ENCODE measurements at regions of chr19 and their contacts with region 1.

Region 1: DNA sequence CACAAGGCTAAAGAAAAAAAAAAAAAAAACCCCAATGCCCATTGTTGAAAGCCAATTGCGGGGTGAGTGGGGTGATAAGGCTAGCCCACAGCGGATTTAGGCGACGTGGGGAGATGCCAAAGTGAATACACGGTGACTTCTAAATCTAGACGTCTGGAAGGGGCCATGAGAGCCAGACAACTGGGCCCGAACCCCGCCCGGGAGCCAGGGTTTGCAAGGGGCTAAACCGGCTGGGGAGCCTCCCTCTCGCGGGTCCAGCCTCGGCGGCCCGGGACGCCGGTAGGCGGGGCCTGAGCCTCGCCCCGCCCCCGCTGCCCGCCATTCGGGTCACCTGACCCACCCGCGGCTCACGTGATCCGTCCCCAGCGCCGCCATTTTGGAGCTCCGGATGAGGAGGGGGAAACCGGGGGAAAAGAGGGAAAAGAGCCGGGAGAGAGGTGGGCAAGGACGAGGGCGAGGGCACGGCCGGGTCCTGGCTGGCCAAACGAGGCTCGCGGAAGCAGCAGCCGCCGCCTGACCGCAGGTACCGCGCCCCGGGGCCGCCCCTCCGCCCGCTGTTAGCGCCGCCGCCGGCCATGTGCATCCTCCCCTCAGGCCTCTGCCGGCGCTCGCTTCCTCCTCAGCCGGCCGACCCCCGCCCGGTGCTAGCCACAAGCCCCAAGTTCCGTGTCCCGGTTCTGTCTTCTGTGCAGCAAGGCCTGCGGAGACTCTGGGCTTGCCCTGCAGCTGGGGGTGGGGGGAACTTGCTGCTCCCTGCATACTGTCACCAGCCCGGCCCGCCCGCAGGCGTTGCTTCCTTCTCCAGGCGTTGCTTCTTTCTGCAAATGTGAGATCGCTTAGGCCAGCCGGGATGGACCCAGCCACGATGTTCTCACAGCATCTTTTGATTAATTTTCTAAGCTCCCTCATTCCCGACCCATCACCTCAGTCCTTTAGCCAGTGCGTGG is at the start of gene ZNF507:
- DNase-seq: peak; percentile 61
- H3K4me3 ChIP-seq: peak within 1 kb of the TSS; percentile 95 to 99 (median 97)
- H3K27ac ChIP-seq: peak within 1 kb of the TSS; percentile 61
- H3K4me1 ChIP-seq: no peaks in the 10 kb centered on the region
- H3K27me3 ChIP-seq: no peaks in the 10 kb centered on the region
- CTCF ChIP-seq: no peak
- total RNA-seq, gene ZNF507: 10.2 to 14.4 TPM

Region 2: GRCh38 chr19:32166238-32166637 is 179.3 kb before region 1 on chr19:
- CTCF ChIA-PET with region 1: no interaction called
- dilution Hi-C with region 1: no loop called
- in situ Hi-C with region 1: no loop called
- intact Hi-C with region 1: no loop called
- DNase-seq: no peak
- H3K4me3 ChIP-seq: no peak overlapping the region
- H3K27ac ChIP-seq: no peak overlapping the region
- H3K4me1 ChIP-seq: no peaks in the 10 kb centered on the region
- H3K27me3 ChIP-seq: no peaks in the 10 kb centered on the region
- CTCF ChIP-seq: no peak

Region 3: GRCh38 chr19:32373585-32374295 is 28.2 kb after region 1 on chr19:
- CTCF ChIA-PET with region 1: no interaction called
- dilution Hi-C with region 1: no loop called
- in situ Hi-C with region 1: no loop called
- intact Hi-C with region 1: loop called (anchors 1 kb)
- DNase-seq: peak; percentile 96
- H3K4me3 ChIP-seq: no peak overlapping the region
- H3K27ac ChIP-seq: peak overlapping the region; percentile 29
- H3K4me1 ChIP-seq: peaks cover 18% of the 10 kb centered on the region
- H3K27me3 ChIP-seq: no peaks in the 10 kb centered on the region
- CTCF ChIP-seq: no peak

Region 4: GRCh38 chr19:32405431-32406161 is 60.1 kb after region 1 on chr19 and contains the start of gene DPY19L3:
- CTCF ChIA-PET with region 1: no interaction called
- dilution Hi-C with region 1: no loop called
- in situ Hi-C with region 1: no loop called
- intact Hi-C with region 1: loop called (anchors 2 kb)
- DNase-seq: peak; percentile 85
- H3K4me3 ChIP-seq: peak within 1 kb of the TSS; percentile 86 to 100 (median 89)
- H3K27ac ChIP-seq: peak within 1 kb of the TSS; percentile 85
- H3K4me1 ChIP-seq: peaks cover 16% of the 10 kb centered on the region
- H3K27me3 ChIP-seq: no peaks in the 10 kb centered on the region
- CTCF ChIP-seq: no peak
- total RNA-seq, gene DPY19L3: 12.3 to 14.3 TPM

Region 5: DNA sequence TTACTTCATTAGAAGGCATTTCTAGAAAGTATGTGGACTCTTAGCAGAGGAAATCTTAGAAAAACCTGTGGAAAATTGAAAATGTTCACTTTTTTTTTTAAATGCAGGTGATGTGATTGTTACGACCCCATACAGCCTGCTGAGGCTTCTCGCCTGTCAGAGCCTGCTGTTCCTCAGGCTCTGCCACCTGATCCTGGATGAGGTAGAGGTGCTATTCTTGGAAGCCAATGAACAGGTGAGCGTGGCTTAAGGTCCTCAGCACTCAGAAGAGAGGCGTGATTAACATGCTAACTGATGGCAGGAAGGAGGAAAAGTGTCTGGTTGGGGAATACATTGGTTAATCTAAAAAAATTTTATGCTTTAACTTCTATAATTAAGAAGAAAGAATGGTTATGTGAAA is 452.7 kb after region 1 on chr19:
- CTCF ChIA-PET with region 1: no interaction called
- dilution Hi-C with region 1: no loop called
- in situ Hi-C with region 1: no loop called
- intact Hi-C with region 1: no loop called
- DNase-seq: no peak
- H3K4me3 ChIP-seq: no peak overlapping the region
- H3K27ac ChIP-seq: no peak overlapping the region
- H3K4me1 ChIP-seq: no peaks in the 10 kb centered on the region
- H3K27me3 ChIP-seq: no peaks in the 10 kb centered on the region
- CTCF ChIP-seq: no peak

Measured in mammary epithelial cell (primary cell).